ENCODE measurements at regions of chr2 and their contacts with region 1.

Region 1: DNA sequence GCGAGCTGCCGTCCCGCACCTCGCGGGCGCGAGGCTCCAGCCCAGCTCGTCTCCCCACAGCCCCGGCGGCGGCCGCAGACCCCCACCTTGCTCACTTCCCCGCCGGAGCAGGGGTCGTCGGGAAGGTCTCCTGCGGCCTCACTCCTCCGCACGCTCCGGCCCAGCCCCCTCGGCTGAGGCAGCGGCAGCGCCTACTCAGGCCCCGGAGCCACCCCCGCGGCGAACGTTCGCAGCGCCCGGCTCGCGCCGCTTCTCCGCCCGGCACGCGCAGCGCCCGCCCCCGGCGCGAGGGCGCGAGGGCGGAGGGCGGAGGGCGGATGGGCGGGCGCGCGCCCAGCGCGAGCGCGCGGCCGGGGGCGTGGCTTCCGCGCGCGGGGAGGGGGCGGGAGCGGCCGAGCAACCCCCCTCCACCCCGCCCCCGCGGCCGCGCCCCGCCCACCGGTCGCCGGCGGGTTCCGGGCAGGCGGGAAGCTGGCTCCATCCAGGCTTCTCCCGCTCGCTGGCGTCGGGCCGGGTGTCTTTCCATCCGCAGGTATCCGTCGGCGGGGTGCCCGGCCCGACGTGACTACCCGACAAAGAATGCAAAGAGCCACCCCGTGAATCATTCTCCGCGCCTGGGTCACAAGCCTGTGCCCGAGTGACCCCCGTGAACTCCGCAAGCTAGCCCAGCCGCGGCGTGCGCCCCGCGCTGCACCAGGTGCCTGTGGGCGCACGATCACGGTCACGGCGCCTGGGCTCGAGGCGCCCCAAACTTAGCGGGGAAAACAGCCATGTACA is at the start of gene DTNB:
- DNase-seq: peak; percentile 59 to 92
- H3K4me3 ChIP-seq: peak within 1 kb of the TSS; percentile 77 to 85
- H3K27ac ChIP-seq: peak within 1 kb of the TSS; percentile 83 to 84
- H3K4me1 ChIP-seq: peaks cover 8 to 11% of the 10 kb centered on the region in 2 donors
- H3K27me3 ChIP-seq: no peaks in the 10 kb centered on the region
- CTCF ChIP-seq: no peak
- total RNA-seq, gene DTNB: 22.7 TPM

Region 2: DNA sequence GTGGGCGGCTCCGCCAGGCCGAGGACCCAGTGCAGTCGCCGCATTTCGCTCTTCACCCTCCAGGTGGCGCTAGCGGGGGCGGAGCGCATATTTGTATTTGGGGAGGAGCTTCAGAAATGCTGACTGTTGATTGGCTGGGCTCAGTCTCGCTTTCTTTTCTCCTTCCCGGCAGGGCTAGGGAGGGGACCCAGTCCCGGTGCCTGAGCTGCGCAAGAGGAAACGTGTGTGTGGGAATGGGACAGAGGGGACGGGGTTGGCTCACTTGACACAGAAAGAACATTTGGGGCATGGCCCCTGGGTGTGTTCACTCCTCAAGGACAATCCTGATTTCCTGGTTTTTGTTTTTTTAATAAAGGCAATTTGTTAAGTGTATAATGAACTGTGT is 311.4 kb before region 1 on chr2:
- intact Hi-C with region 1: loop called (anchors 5 kb)
- DNase-seq: peak; percentile 82 to 96
- H3K4me3 ChIP-seq: peak overlapping the region; percentile 43 to 59
- H3K27ac ChIP-seq: peak overlapping the region; percentile 4 to 34
- H3K4me1 ChIP-seq: no peaks in the 10 kb centered on the region
- H3K27me3 ChIP-seq: no peaks in the 10 kb centered on the region
- CTCF ChIP-seq: peak; percentile 89 to 98 (median 97)

Region 3: GRCh38 chr2:25618642-25619037 is 54.8 kb before region 1 on chr2:
- intact Hi-C with region 1: loop called (anchors 2 kb)
- DNase-seq: no peak
- H3K4me3 ChIP-seq: peak overlapping the region; percentile 18 to 37
- H3K27ac ChIP-seq: peak overlapping the region; percentile 81 to 83
- H3K4me1 ChIP-seq: peaks cover 0 to 19% of the 10 kb centered on the region in 2 donors
- H3K27me3 ChIP-seq: no peaks in the 10 kb centered on the region
- CTCF ChIP-seq: no peak

Region 4: GRCh38 chr2:25894135-25894830 is 220.8 kb after region 1 on chr2:
- intact Hi-C with region 1: no loop called
- DNase-seq: no peak
- H3K4me3 ChIP-seq: no peak overlapping the region
- H3K27ac ChIP-seq: no peak overlapping the region
- H3K4me1 ChIP-seq: no peaks in the 10 kb centered on the region
- H3K27me3 ChIP-seq: no peaks in the 10 kb centered on the region
- CTCF ChIP-seq: no peak